ENCODE measurements at regions of chr21 and their contacts with region 1.

Region 1: DNA sequence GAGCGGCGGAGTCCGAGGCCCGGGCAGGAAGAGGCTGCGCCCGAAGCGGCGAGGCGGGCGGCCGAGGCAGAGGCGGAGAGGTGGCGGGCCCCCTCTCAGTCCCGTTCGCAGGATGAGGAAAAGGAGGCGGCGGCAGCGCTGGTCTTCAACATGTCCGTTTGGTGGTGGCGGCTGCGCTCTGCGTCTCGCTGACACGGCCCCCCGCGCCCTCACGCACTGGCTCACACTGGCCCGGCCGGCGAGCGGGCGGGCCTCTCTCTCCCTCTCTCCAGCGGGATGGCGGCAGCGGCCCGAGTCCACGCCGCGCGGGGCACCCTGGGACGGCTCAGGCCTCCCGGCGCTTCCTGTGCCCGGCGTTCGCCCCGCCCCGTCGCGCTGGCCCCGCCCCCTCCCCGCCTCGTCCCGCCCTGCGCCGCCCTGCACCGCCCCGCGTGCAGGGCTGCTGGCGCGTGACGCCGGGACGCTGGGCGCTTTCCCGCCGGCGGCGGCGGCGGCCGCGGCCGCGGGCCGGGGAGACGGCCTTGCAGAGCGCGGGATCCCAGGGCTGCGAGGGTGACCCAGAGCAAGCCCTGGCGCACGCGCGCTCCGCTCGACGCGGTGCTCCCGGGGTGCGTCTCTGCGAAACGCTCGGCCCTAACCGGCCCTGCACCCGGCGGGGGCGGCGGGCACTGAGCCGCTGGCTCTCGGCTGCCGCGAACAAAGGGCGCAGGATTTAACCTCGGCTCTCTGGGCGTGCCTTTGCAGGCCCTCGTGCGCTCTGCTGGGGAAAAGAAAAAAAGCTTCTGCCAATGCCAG is at the start of gene SCAF4:
- DNase-seq: peak; percentile 90 to 92
- H3K4me3 ChIP-seq: peak within 1 kb of the TSS; percentile 71 to 99 (median 72)
- H3K27ac ChIP-seq: peak within 1 kb of the TSS; percentile 93 to 95 (median 93)
- H3K4me1 ChIP-seq: peaks cover 25 to 28% of the 10 kb centered on the region in 2 donors
- H3K27me3 ChIP-seq: no peaks in the 10 kb centered on the region
- CTCF ChIP-seq: no peak
- POLR2A ChIP-seq: peak; percentile 25 to 91
- total RNA-seq, gene SCAF4: 13.0 to 27.4 (median 18.7) TPM

Region 2: DNA sequence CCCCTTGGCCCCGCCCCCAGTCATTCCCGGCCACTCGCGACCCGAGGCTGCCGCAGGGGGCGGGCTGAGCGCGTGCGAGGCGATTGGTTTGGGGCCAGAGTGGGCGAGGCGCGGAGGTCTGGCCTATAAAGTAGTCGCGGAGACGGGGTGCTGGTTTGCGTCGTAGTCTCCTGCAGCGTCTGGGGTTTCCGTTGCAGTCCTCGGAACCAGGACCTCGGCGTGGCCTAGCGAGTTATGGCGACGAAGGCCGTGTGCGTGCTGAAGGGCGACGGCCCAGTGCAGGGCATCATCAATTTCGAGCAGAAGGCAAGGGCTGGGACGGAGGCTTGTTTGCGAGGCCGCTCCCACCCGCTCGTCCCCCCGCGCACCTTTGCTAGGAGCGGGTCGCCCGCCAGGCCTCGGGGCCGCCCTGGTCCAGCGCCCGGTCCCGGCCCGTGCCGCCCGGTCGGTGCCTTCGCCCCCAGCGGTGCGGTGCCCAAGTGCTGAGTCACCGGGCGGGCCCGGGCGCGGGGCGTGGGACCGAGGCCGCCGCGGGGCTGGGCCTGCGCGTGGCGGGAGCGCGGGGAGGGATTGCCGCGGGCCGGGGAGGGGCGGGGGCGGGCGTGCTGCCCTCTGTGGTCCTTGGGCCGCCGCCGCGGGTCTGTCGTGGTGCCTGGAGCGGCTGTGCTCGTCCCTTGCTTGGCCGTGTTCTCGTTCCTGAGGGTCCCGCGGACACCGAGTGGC is 72.3 kb before region 1 on chr21 and contains the start of gene SOD1:
- intact Hi-C with region 1: loop called (anchors 5 kb)
- DNase-seq: peak; percentile 94
- H3K4me3 ChIP-seq: peak within 1 kb of the TSS; percentile 54 to 74 (median 66)
- H3K27ac ChIP-seq: peak within 1 kb of the TSS; percentile 40 to 87 (median 86)
- H3K4me1 ChIP-seq: peaks cover 14 to 35% of the 10 kb centered on the region in 2 donors
- H3K27me3 ChIP-seq: no peaks in the 10 kb centered on the region
- CTCF ChIP-seq: peak in 1 of 6 experiments; percentile 1
- POLR2A ChIP-seq: peak; percentile 38 to 96
- total RNA-seq, gene SOD1: 147 to 331 (median 261) TPM

Region 3: GRCh38 chr21:31908106-31909031 is 176.4 kb after region 1 on chr21:
- intact Hi-C with region 1: no loop called
- DNase-seq: peak; percentile 40 to 47
- H3K4me3 ChIP-seq: no peak overlapping the region
- H3K27ac ChIP-seq: no peak overlapping the region
- H3K4me1 ChIP-seq: peaks cover 0 to 12% of the 10 kb centered on the region in 2 donors
- H3K27me3 ChIP-seq: no peaks in the 10 kb centered on the region
- CTCF ChIP-seq: no peak
- POLR2A ChIP-seq: no peak

Measured in thyroid gland (tissue), 4 donors.